GM12878 (cell line): ENCODE measurements at regions of chr9 and their contacts with region 1.

Region 1: DNA sequence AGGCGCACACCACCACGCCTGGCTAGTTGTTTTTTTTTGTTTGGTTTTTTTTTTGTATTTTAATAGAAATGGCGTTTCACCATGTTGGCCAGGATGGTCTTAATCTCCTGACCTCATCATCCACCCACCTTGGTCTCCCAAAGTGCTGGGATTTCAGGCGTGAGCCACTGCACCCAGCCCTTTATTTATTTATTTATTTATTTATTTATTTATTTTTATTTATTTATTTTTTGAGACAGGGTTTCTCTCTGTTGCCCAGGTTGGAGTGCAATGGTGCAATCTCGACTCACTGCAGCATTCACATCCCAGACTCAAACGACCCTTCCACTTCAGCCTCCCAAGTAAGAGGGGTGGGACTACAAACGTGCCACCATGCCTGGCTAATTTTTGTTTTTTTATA is 63.0 kb upstream of the ADAMTSL1 start:
- DNase-seq: no peak
- ATAC-seq: no peak
- H3K4me3 ChIP-seq: no peak overlapping the region
- H3K27ac ChIP-seq: no peak overlapping the region
- H3K4me1 ChIP-seq: no peaks in the 10 kb centered on the region
- H3K27me3 ChIP-seq: no peaks in the 10 kb centered on the region
- CTCF ChIP-seq: no peak
- EP300 ChIP-seq: no peak
- POLR2A ChIP-seq: no peak
- RAD21 ChIP-seq: no peak

Region 2: GRCh38 chr9:18473652-18474279 is 62.8 kb after region 1 on chr9 and contains the start of gene ADAMTSL1:
- CTCF ChIA-PET with region 1: no interaction called
- POLR2A ChIA-PET with region 1: no interaction called
- RAD21 ChIA-PET with region 1: no interaction called
- SMC1A ChIA-PET with region 1: no interaction called
- in situ Hi-C with region 1: loop called (anchors 10 kb)
- intact Hi-C with region 1: no loop called
- DNase-seq: no peak
- ATAC-seq: no peak
- H3K4me3 ChIP-seq: no peak within 1 kb of the TSS
- H3K27ac ChIP-seq: no peak within 1 kb of the TSS
- H3K4me1 ChIP-seq: no peaks in the 10 kb centered on the region
- H3K27me3 ChIP-seq: no peaks in the 10 kb centered on the region
- CTCF ChIP-seq: no peak
- EP300 ChIP-seq: no peak
- POLR2A ChIP-seq: no peak
- RAD21 ChIP-seq: no peak
- polyA plus RNA-seq, gene ADAMTSL1: not detected